Activated CD4-positive, alpha-beta memory T cell treated with anti-CD3 and anti-CD28 coated beads for 36 hours (primary cell): ENCODE measurements at regions of chr7 and their contacts with region 1.

Region 1: DNA sequence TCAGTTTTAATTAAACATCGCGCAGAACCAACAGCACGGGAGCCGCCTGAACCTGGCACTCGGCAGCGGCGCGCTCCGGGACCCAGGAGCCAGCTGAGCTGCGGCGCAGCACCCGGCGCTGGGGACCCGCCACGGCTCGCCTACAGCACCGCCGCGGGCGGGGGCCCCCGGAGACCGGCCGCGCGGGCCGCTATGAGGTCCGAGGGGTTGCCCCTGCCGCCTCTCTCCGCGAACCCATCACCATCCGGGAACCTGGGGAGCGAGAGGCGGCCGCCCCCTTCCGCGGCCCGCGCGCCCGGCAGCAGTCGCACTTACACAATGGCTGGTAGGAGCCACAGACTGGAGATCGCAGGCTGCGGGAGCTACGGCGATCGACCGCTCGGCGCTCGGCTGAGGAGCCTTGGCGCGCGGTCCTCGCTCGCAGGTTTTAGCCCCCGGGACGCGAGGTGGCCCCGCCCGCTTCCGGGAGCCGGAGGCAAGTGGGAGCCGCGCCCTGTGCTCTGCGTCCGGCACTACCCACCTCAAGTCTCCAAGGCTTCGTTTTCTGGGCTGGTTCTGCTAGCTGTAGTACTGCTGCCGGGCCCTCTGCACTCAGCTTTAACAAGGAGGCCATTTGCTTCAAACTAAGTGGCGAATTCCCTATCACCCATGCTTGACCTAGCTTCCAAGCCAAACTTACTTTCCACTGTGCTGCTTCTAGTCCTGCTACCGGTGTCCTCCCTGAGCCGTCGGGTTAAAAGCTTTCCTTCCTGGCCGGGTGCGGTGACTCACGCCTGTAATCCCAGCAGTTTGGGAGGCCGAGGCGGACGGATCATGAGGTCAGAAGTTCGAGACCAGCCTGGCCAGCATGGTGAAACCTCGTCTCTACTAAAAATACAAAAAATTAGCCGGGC is at the start of gene TPK1:
- DNase-seq: peak; percentile 94
- H3K4me3 Mint-ChIP-seq: peak within 1 kb of the TSS; percentile 91
- H3K27ac Mint-ChIP-seq: peak within 1 kb of the TSS; percentile 100
- H3K4me1 Mint-ChIP-seq: peaks cover 36% of the 10 kb centered on the region
- H3K27me3 Mint-ChIP-seq: no peaks in the 10 kb centered on the region
- total RNA-seq, gene TPK1: 19.1 to 26.0 TPM

Region 2: DNA sequence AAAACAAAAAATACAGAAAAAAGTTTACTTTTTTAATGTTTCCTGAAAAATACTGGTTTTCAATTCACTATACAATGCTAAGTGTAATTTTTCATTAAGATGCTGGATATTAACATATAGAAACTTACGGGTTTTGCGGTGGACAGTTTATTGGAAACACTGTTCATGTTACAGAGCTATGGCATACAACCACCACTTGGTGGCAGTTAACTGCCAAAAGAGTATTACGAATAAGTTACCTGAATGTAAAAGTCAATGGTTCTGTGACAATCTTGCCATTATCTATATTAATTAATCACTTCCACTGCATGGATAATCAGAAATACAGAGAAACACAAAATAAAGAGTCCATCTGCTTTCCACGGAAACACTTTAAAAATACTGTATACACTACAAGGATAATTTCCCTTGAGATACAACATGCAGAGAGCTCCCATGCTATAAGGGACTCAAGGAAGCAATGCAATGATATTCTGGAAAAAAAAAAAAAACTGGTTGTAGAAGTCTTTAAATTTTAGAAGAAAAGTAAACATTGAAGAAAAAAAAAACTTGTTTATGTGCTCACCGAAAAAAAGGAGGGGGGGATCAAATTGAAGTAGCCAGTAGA is 97.1 kb before region 1 on chr7:
- CTCF ChIA-PET with region 1: interaction called, 23 read pairs
- POLR2A ChIA-PET with region 1: interaction called, 5 read pairs
- intact Hi-C with region 1: loop called (anchors 1 kb)
- DNase-seq: no peak
- H3K4me3 Mint-ChIP-seq: no peak overlapping the region
- H3K27ac Mint-ChIP-seq: no peak overlapping the region
- H3K4me1 Mint-ChIP-seq: no peaks in the 10 kb centered on the region
- H3K27me3 Mint-ChIP-seq: no peaks in the 10 kb centered on the region

Region 3: DNA sequence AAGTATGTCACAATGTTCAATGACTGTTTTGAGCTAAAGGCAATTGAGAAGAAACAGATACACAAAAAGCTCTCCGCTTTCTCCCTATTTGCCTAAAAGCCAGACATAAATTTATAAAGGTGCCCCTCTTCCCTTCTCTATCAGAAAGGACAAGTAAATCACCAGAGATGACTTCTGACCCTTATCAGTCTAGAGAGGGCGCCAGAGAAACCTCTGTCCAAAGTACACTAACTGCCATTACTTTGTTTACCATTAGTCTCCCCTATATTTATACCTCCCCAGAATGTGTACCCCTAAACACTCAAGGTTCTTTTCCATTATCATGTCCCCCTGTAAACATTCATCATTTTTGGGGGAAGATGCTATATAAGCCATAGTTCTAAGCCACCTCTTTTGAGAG is 49.4 kb before region 1 on chr7:
- CTCF ChIA-PET with region 1: interaction called, 5 read pairs
- POLR2A ChIA-PET with region 1: no interaction called
- intact Hi-C with region 1: loop called (anchors 2 kb)
- DNase-seq: no peak
- H3K4me3 Mint-ChIP-seq: no peak overlapping the region
- H3K27ac Mint-ChIP-seq: no peak overlapping the region
- H3K4me1 Mint-ChIP-seq: peaks cover 25% of the 10 kb centered on the region
- H3K27me3 Mint-ChIP-seq: no peaks in the 10 kb centered on the region

Region 4: GRCh38 chr7:144805627-144806239 is 30.2 kb before region 1 on chr7:
- CTCF ChIA-PET with region 1: interaction called, 3 read pairs
- POLR2A ChIA-PET with region 1: interaction called, 5 read pairs
- intact Hi-C with region 1: loop called (anchors 2 kb)
- DNase-seq: no peak
- H3K4me3 Mint-ChIP-seq: no peak overlapping the region
- H3K27ac Mint-ChIP-seq: no peak overlapping the region
- H3K4me1 Mint-ChIP-seq: peaks cover 51% of the 10 kb centered on the region
- H3K27me3 Mint-ChIP-seq: no peaks in the 10 kb centered on the region

Region 5: DNA sequence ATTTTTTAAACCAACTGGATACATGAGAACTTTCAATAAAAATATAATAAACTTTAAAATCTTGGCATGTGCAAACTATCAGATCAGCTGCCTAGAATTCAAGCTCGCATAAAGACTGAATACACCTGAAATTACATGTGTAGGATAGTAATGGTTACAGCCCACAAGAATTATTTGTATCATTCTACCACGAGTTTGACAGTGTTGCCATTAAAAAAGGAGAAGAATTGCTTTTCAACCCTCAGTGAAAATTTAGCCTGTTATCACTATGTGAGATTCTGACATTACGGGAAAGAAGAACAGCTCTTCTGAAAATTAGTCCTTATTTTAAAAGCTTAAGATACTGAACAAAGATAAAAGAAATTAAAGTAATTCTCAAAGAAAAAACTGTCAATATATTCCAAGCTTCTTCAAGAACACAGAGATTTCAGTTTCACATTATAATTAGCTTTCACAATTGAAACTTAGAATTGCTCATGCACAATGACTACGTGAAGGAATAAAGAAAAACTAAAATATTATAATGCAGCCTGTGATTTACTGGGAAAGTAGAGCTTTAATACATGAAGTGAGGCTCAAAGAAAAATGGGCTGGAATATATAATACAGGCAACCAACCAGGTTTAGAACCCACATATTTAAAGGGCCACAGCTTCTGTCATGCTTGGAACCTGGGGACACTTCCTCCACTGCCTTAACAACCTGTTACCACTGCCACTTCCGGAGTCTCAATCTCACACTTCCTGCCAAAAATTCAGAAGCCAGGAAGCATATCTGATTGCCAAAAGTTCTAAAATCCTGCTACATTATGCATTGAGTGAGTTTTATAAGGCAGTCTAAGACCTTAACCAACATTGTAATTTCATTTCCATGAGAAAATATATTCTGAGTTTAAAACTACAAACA is 23.3 kb before region 1 on chr7:
- CTCF ChIA-PET with region 1: interaction called, 18 read pairs
- POLR2A ChIA-PET with region 1: interaction called, 99 read pairs
- intact Hi-C with region 1: no loop called
- DNase-seq: peak; percentile 59
- H3K4me3 Mint-ChIP-seq: peak overlapping the region; percentile 70
- H3K27ac Mint-ChIP-seq: peak overlapping the region; percentile 91
- H3K4me1 Mint-ChIP-seq: peaks cover 54% of the 10 kb centered on the region
- H3K27me3 Mint-ChIP-seq: no peaks in the 10 kb centered on the region

Region 6: DNA sequence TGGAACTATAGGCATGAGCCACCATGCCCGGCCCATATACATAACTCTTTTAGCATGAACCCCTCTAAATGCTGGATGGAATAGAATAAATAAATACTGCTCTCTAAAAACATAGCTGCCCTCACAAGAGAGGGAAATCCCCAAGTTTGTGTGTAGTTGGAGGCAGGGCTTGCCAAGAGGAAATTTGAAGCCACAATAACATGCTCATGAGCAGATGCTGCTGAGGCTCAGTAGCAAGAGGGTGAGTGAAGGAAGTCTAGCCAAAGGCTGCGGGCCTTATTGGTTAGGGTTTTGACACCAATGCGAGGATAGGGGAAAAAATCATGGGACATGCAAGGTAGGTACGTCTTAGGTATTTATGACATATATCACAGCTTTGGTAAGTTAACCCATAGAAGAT is 17.4 kb before region 1 on chr7:
- CTCF ChIA-PET with region 1: interaction called, 18 read pairs
- POLR2A ChIA-PET with region 1: interaction called, 99 read pairs
- intact Hi-C with region 1: loop called (anchors 1 kb)
- DNase-seq: peak; percentile 66
- H3K4me3 Mint-ChIP-seq: no peak overlapping the region
- H3K27ac Mint-ChIP-seq: peak overlapping the region; percentile 90
- H3K4me1 Mint-ChIP-seq: peaks cover 68% of the 10 kb centered on the region
- H3K27me3 Mint-ChIP-seq: no peaks in the 10 kb centered on the region

Region 7: DNA sequence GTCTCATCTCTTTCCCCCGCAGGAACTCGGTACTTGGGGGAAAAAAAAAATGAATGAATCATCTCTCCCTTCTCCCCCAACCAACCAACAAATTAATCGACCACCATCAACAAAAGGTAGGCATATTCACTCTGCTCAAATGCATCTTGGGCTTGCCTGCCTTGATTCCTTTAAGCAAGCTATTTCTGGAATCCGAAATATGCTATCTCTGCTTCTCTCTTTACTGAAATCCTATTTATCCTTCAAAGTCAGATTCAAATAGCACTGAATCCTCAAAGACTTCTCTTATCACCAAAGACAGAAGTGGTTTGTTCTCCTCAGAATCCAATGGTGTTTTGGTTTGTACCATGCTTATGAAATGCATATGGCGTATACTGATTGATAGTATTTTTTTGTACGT is 49.6 kb after region 1 on chr7:
- CTCF ChIA-PET with region 1: no interaction called
- POLR2A ChIA-PET with region 1: no interaction called
- intact Hi-C with region 1: no loop called
- DNase-seq: no peak
- H3K4me3 Mint-ChIP-seq: no peak overlapping the region
- H3K27ac Mint-ChIP-seq: no peak overlapping the region
- H3K4me1 Mint-ChIP-seq: no peaks in the 10 kb centered on the region
- H3K27me3 Mint-ChIP-seq: no peaks in the 10 kb centered on the region